Transverse colon (tissue), 4 donors: ENCODE measurements at regions of chr20 and their contacts with region 1.

Region 1: DNA sequence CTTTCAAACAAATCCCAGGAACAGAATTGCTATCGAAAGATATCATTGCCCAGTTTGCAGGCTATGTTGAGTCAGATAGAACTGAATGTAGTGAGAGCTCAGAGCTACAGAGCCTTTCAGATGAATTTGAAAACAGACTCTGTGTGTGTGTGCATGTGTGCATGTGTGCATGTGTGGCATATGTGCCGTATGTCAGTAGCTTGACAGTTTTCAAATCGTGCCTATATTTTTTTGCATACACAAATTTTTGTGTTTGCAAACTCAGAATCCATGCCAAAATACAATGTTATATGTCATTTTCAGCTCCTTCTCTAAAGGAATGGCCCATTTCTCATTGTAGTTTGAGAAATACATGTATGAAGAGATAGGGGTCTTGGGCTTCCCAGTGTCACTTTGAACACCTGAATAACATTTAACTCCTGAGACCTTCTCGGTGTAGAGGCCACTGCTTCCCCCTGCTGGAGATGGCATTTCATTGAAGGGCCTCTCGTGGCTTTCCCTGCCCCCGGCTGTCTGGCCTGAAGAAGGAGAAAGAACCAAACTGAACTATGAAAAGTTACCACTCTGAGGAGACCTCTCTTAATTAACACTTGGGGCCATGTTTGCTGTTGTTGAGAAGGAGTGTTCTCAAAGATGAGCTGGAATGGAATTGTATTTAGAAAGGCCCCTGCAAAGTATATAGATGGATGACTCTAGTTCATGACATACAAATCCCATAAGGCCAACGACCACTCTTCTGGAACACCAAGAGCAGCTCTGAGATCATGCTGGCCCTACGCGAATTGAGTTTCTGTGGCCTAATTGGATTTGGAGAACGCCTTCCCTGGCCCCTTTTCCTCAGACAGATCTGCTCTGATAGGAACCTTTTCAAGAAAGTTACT is 58.7 kb downstream of the VAPB start:
- DNase-seq: peak; percentile 55
- H3K4me3 ChIP-seq: no peak overlapping the region
- H3K27ac ChIP-seq: no peak overlapping the region
- H3K4me1 ChIP-seq: peaks cover 0 to 17% (median 2%) of the 10 kb centered on the region in 4 donors
- H3K27me3 ChIP-seq: no peaks in the 10 kb centered on the region
- CTCF ChIP-seq: peak; percentile 50 to 70 (median 62)
- EP300 ChIP-seq: no peak
- POLR2A ChIP-seq: no peak

Region 2: GRCh38 chr20:57030611-57031600 is 1416.8 kb before region 1 on chr20:
- in situ Hi-C with region 1: no loop called
- intact Hi-C with region 1: no loop called
- DNase-seq: no peak
- H3K4me3 ChIP-seq: no peak overlapping the region
- H3K27ac ChIP-seq: no peak overlapping the region
- H3K4me1 ChIP-seq: no peaks in the 10 kb centered on the region
- H3K27me3 ChIP-seq: peaks cover 7% of the 10 kb centered on the region
- CTCF ChIP-seq: no peak
- EP300 ChIP-seq: no peak
- POLR2A ChIP-seq: no peak

Region 3: DNA sequence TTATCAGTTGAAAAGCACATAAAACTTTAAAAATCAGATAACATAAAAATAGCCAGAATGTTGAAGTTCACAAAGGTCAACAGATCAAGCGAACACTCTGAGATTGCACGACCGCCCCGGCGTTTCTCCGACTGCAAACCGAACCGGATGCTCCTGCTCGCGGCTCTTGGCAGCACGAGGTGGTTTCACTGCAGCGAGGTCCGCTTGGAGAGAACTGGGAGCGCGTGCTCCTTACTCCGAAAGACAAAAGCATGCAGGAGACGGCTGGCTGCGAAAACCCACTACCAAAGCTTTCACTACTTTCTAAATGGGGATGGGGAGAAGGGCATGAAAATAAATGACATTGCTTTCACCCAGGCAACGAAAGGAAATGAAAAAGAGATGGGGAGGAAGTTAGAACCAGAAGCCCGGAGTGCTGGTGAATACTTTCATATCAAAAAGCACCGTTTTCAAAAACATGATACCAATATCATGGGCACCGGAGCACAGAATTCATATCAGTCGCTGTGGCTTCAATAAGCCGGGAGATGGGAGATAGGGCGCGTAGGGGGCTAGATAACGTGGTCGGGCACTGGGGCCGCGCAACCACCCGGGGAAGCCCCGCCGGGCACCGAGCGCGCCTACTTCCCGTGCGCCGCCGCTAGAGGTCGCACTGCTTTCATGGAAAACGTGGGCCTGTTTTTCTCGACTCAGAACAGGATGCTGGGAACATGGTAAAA is 211.0 kb before region 1 on chr20:
- in situ Hi-C with region 1: loop called in 2 of 4 experiments (anchors 10 kb)
- intact Hi-C with region 1: loop called (anchors 2 kb)
- DNase-seq: peak; percentile 74
- H3K4me3 ChIP-seq: peak overlapping the region; percentile 6 to 58 (median 42)
- H3K27ac ChIP-seq: peak overlapping the region in 3 of 4 donors; percentile 19 to 32 (median 28)
- H3K4me1 ChIP-seq: peaks cover 0 to 8% (median 0%) of the 10 kb centered on the region in 4 donors
- H3K27me3 ChIP-seq: no peaks in the 10 kb centered on the region
- CTCF ChIP-seq: peak; percentile 86 to 98 (median 96)
- EP300 ChIP-seq: no peak
- POLR2A ChIP-seq: no peak

Region 4: DNA sequence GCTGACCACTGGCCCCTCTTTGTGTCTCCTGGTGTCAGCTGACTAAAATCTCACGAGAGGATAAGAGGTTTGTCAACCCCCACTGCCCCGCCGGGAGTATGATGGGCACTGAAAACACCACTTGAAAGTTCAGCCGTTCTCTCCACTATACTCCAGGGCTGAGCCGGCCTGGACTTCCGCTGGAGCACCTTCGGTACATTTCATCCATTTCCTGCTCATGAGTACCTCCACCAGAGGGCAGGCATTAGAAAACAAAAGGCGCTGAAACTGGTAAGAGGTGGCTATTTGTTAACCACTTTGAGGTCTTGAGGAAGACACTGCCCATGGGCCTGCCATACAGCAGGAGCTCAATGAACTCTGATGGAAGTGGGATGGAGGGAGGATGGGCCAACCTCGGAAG is 201.4 kb before region 1 on chr20:
- in situ Hi-C with region 1: loop called in 1 of 4 experiments (anchors 10 kb)
- intact Hi-C with region 1: no loop called
- DNase-seq: no peak
- H3K4me3 ChIP-seq: no peak overlapping the region
- H3K27ac ChIP-seq: no peak overlapping the region
- H3K4me1 ChIP-seq: no peaks in the 10 kb centered on the region
- H3K27me3 ChIP-seq: no peaks in the 10 kb centered on the region
- CTCF ChIP-seq: peak in 4 of 5 experiments; percentile 11 to 41 (median 27)
- EP300 ChIP-seq: no peak
- POLR2A ChIP-seq: no peak

Region 5: DNA sequence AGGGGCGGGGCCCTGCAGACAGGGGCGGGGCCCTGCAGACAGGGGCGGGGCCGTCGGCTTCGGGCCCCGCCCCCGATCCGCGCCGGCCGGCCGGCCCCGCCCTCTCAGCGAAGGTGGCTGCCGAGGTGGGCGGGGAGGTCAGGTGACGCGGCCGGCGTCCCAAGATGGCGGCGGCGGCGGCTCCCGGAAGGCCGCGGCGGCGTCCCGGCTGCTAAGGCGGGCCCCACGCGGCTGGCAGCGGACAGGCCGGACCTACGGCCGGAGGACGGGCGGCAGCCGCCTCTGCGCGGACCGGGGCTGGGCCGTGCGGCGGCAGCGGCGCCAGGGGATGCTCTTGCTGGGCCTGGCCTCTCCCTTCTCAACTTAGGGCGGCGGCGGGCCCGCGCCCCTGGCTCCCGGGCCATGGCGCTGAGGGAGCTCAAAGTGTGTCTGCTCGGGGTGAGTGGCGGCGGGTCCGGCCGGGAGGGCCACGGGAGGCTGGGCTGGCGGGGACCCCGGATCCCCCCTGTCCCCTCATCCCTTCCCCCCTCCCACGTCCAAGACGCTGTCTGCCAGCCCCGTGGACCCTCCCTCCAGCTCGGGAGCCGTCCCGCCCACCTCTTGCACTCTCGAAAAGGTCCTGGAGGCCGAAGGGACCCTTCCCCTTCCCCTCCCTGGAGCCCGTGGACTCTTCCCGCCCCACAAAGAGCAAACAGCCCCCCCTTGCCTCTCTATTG is 138.0 kb before region 1 on chr20 and contains the start of gene RAB22A:
- in situ Hi-C with region 1: no loop called
- intact Hi-C with region 1: loop called (anchors 10 kb)
- DNase-seq: peak; percentile 89
- H3K4me3 ChIP-seq: peak within 1 kb of the TSS; percentile 78 to 98 (median 88)
- H3K27ac ChIP-seq: peak within 1 kb of the TSS; percentile 90 to 91 (median 90)
- H3K4me1 ChIP-seq: peaks cover 9 to 50% (median 29%) of the 10 kb centered on the region in 4 donors
- H3K27me3 ChIP-seq: no peaks in the 10 kb centered on the region
- CTCF ChIP-seq: no peak
- EP300 ChIP-seq: no peak
- POLR2A ChIP-seq: peak; percentile 1
- total RNA-seq, gene RAB22A: 4.2 to 25.9 (median 20.7) TPM

Region 6: DNA sequence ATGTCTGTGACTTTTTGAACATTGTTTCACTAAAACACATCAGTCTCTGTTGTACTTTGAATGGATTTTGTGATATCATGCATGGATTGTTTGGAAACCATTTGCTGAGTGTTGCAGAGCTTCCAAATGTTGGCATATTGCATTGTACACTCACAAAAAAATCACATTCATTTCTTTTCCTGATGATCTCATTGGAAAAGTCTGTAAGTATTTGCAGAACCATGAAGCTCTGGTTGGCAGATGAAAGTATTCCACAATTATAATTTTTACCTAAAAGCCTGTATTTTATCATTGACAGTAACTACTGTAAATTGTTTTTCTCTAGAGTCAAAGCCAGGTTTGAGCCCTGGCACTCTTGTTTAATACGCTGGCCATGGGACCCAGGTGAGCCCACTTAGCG is 16.6 kb before region 1 on chr20:
- in situ Hi-C with region 1: no loop called
- intact Hi-C with region 1: no loop called
- DNase-seq: no peak
- H3K4me3 ChIP-seq: no peak overlapping the region
- H3K27ac ChIP-seq: peak overlapping the region in 1 of 4 donors; percentile 67
- H3K4me1 ChIP-seq: peaks cover 23 to 52% (median 33%) of the 10 kb centered on the region in 4 donors
- H3K27me3 ChIP-seq: no peaks in the 10 kb centered on the region
- CTCF ChIP-seq: no peak
- EP300 ChIP-seq: no peak
- POLR2A ChIP-seq: no peak

Region 7: GRCh38 chr20:58469616-58470015 is 21.9 kb after region 1 on chr20:
- in situ Hi-C with region 1: no loop called
- intact Hi-C with region 1: loop called (anchors 1 kb)
- DNase-seq: no peak
- H3K4me3 ChIP-seq: no peak overlapping the region
- H3K27ac ChIP-seq: no peak overlapping the region
- H3K4me1 ChIP-seq: peaks cover 0 to 16% (median 0%) of the 10 kb centered on the region in 4 donors
- H3K27me3 ChIP-seq: peaks cover 6% of the 10 kb centered on the region
- CTCF ChIP-seq: no peak
- EP300 ChIP-seq: no peak
- POLR2A ChIP-seq: no peak